BJ (cell line): ENCODE measurements at regions of chr15 and their contacts with region 1.

Region 1: GRCh38 chr15:66803182-66803729 is 101.2 kb downstream of the SMAD6 start:
- DNase-seq: peak; percentile 91
- H3K4me3 ChIP-seq: no peak overlapping the region
- H3K27me3 ChIP-seq: no peaks in the 10 kb centered on the region
- CTCF ChIP-seq: no peak

Region 2: GRCh38 chr15:66673410-66674322 is 129.6 kb before region 1 on chr15:
- CTCF ChIA-PET with region 1: no interaction called
- POLR2A ChIA-PET with region 1: no interaction called
- DNase-seq: no peak
- H3K4me3 ChIP-seq: no peak overlapping the region
- H3K27me3 ChIP-seq: no peaks in the 10 kb centered on the region
- CTCF ChIP-seq: no peak

Region 3: GRCh38 chr15:66747886-66748707 is 55.2 kb before region 1 on chr15:
- CTCF ChIA-PET with region 1: interaction called, 3 read pairs
- POLR2A ChIA-PET with region 1: interaction called, 16 read pairs
- DNase-seq: peak; percentile 93
- H3K4me3 ChIP-seq: no peak overlapping the region
- H3K27me3 ChIP-seq: no peaks in the 10 kb centered on the region
- CTCF ChIP-seq: no peak